ENCODE measurements at regions of chr10 and their contacts with region 1.

Region 1: DNA sequence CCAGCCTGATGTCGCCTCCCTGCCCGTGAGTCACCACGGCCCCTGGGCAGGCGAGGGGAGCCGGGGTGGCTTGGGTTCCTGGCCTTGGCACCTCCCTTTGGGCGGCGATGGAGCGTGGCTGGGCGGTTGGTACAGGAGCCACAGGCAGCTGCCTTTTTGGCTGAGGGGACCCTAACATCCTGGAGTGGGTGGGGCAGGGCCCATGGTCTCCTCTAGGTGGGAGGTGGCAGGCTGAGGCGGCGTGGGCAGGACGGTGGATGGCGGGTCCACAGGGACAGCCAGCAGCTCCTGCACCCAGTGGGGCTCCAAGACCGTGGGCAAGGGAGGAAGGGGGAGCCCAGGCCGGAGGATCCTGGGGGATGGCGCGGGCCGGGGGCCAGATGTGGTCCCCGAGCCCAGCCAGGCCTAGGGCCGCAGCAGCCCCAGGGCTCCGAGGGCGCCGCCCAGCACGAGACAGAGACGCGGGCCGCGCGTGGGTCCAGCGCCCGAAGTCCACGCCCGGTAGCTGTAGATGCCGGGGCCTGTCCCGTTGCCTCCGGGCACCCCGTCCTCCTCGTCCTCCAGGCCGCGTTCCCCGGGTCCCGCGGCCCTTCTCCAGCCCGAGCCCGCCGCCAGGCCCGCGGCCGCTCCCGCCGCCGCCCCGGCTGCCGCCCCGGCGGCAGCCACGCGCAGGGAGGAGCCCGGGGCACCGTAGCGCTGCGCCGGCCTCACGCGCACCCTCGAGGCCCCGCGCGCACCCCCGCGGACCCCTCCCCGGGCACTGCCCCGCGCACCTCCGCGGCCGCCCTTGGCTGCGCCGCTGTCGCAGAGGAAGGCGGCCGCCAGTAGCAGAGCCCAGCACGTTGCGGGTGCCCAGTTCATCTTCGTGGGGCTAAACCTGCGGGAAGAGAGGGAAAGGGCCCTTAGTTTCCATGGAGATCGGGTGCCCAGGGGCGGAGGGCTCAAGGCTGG is 1.3 kb downstream of the SPRN start:
- DNase-seq: no peak
- ATAC-seq: peak in 3 of 4 donors; percentile 11 to 35 (median 19)
- H3K4me3 ChIP-seq: peak overlapping the region in 3 of 12 donors; percentile 12 to 33 (median 29)
- H3K27ac ChIP-seq: no peak overlapping the region
- H3K4me1 ChIP-seq: peaks cover 0 to 10% (median 0%) of the 10 kb centered on the region in 12 donors
- H3K27me3 ChIP-seq: peaks cover 0 to 17% (median 0%) of the 10 kb centered on the region in 9 donors
- CTCF ChIP-seq: no peak
- POLR2A ChIP-seq: no peak

Region 2: GRCh38 chr10:133565441-133566294 is 142.6 kb after region 1 on chr10 and contains the start of gene SYCE1:
- intact Hi-C with region 1: loop called in 3 of 10 experiments (anchors 5 to 10 kb)
- DNase-seq: peak in 1 of 5 donors; percentile 34
- ATAC-seq: no peak
- H3K4me3 ChIP-seq: no peak within 1 kb of the TSS
- H3K27ac ChIP-seq: no peak within 1 kb of the TSS
- H3K4me1 ChIP-seq: no peaks in the 10 kb centered on the region
- H3K27me3 ChIP-seq: peaks cover 0 to 30% (median 4%) of the 10 kb centered on the region in 9 donors
- CTCF ChIP-seq: no peak
- POLR2A ChIP-seq: no peak
- total RNA-seq, gene SYCE1: 0.32 to 0.39 (median 0.37) TPM in 3 of 9 donors, not detected in the others